K562 (cell line): ENCODE measurements at regions of chr2 and their contacts with region 1.

Region 1: GRCh38 chr2:28958689-28959088 is 22.4 kb upstream of the TOGARAM2 start:
- DNase-seq: peak; percentile 42 to 67 (median 54)
- ATAC-seq: peak; percentile 82
- H3K4me3 ChIP-seq: no peak overlapping the region
- H3K27ac ChIP-seq: no peak overlapping the region
- H3K4me1 ChIP-seq: peaks cover 0 to 5% of the 10 kb centered on the region in 2 experiments; a peak in 3 of 5 replicates
- H3K27me3 ChIP-seq: peaks cover 18 to 26% of the 10 kb centered on the region in 2 experiments; a peak in 4 of 5 replicates
- CTCF ChIP-seq: peak; percentile 60 to 84 (median 69)
- EP300 ChIP-seq: no peak
- POLR2A ChIP-seq: no peak
- RAD21 ChIP-seq: peak; percentile 88 to 91

Region 2: GRCh38 chr2:28566521-28567041 is 392.1 kb before region 1 on chr2:
- CTCF ChIA-PET with region 1: no interaction called
- POLR2A ChIA-PET with region 1: no interaction called
- in situ Hi-C with region 1: no loop called
- intact Hi-C with region 1: loop called (anchors 10 kb)
- DNase-seq: peak; percentile 87 to 97 (median 96)
- ATAC-seq: peak; percentile 99
- H3K4me3 ChIP-seq: peak overlapping the region; percentile 42
- H3K27ac ChIP-seq: no peak overlapping the region
- H3K4me1 ChIP-seq: peaks cover 0 to 7% of the 10 kb centered on the region in 2 experiments; a peak in 3 of 5 replicates
- H3K27me3 ChIP-seq: peaks cover 5 to 14% of the 10 kb centered on the region in 2 experiments; a peak in 4 of 5 replicates
- CTCF ChIP-seq: peak; percentile 93 to 100 (median 100)
- EP300 ChIP-seq: no peak
- POLR2A ChIP-seq: no peak
- RAD21 ChIP-seq: peak; percentile 95 to 96

Region 3: GRCh38 chr2:28821295-28821958 is 137.3 kb before region 1 on chr2:
- CTCF ChIA-PET with region 1: interaction called, 18 read pairs
- POLR2A ChIA-PET with region 1: no interaction called
- in situ Hi-C with region 1: loop called (anchors 5 kb)
- intact Hi-C with region 1: no loop called
- DNase-seq: peak; percentile 36 to 74 (median 44)
- ATAC-seq: peak; percentile 94
- H3K4me3 ChIP-seq: no peak overlapping the region
- H3K27ac ChIP-seq: no peak overlapping the region
- H3K4me1 ChIP-seq: no peaks in the 10 kb centered on the region
- H3K27me3 ChIP-seq: no peaks in the 10 kb centered on the region; a peak in 1 of 5 replicates
- CTCF ChIP-seq: peak; percentile 69 to 84 (median 69)
- EP300 ChIP-seq: no peak
- POLR2A ChIP-seq: no peak
- RAD21 ChIP-seq: peak; percentile 73 to 89

Region 4: GRCh38 chr2:29196792-29197788 is 238.4 kb after region 1 on chr2:
- CTCF ChIA-PET with region 1: interaction called, 48 read pairs
- POLR2A ChIA-PET with region 1: no interaction called
- in situ Hi-C with region 1: loop called (anchors 5 kb)
- intact Hi-C with region 1: loop called (anchors 1 kb)
- DNase-seq: peak; percentile 76 to 79 (median 77)
- ATAC-seq: peak; percentile 98
- H3K4me3 ChIP-seq: no peak overlapping the region
- H3K27ac ChIP-seq: no peak overlapping the region
- H3K4me1 ChIP-seq: no peaks in the 10 kb centered on the region
- H3K27me3 ChIP-seq: peaks cover 9 to 17% of the 10 kb centered on the region in 2 experiments; a peak in 4 of 5 replicates
- CTCF ChIP-seq: peak; percentile 85 to 89 (median 88)
- EP300 ChIP-seq: no peak
- POLR2A ChIP-seq: no peak
- RAD21 ChIP-seq: peak; percentile 92 to 95

Region 5: DNA sequence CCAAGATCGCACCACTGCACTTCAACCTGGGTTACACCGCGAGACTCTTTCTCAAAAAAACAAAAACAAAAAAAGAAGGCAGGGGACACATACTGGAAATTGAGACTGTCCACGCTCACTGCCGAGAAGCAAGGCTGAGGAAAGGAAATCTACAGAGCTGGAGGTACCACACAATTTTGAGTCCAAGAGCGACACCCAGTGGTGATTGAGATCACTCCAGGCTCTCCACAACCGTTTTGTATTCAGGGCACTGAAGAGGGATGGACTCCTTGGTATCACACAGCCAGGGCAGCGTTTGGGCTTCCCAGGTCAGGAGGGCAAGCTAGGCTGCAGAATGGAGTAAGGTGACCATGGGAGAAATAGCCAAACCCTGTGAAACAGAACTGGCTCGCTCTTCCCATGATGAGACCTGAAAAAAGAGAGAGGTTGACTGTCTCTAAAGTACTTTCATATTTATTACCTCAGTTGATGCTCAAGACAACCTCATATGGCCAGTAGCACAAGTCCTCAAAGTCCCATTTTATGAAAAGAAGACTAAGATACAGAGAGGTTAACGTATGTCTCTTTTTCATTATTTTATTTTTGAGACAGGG is 1113.7 kb after region 1 on chr2:
- CTCF ChIA-PET with region 1: interaction called, 3 read pairs
- POLR2A ChIA-PET with region 1: no interaction called
- in situ Hi-C with region 1: loop called (anchors 25 kb)
- intact Hi-C with region 1: loop called (anchors 10 kb)
- DNase-seq: peak; percentile 57 to 80 (median 63)
- ATAC-seq: peak; percentile 100
- H3K4me3 ChIP-seq: no peak overlapping the region
- H3K27ac ChIP-seq: no peak overlapping the region
- H3K4me1 ChIP-seq: no peaks in the 10 kb centered on the region
- H3K27me3 ChIP-seq: peaks cover 3 to 18% of the 10 kb centered on the region in 2 experiments; a peak in 3 of 5 replicates
- CTCF ChIP-seq: peak; percentile 67 to 85 (median 75)
- EP300 ChIP-seq: no peak
- POLR2A ChIP-seq: no peak
- RAD21 ChIP-seq: peak; percentile 62 to 82